B cell (primary cell): ENCODE measurements at regions of chr1 and their contacts with region 1.

Region 1: DNA sequence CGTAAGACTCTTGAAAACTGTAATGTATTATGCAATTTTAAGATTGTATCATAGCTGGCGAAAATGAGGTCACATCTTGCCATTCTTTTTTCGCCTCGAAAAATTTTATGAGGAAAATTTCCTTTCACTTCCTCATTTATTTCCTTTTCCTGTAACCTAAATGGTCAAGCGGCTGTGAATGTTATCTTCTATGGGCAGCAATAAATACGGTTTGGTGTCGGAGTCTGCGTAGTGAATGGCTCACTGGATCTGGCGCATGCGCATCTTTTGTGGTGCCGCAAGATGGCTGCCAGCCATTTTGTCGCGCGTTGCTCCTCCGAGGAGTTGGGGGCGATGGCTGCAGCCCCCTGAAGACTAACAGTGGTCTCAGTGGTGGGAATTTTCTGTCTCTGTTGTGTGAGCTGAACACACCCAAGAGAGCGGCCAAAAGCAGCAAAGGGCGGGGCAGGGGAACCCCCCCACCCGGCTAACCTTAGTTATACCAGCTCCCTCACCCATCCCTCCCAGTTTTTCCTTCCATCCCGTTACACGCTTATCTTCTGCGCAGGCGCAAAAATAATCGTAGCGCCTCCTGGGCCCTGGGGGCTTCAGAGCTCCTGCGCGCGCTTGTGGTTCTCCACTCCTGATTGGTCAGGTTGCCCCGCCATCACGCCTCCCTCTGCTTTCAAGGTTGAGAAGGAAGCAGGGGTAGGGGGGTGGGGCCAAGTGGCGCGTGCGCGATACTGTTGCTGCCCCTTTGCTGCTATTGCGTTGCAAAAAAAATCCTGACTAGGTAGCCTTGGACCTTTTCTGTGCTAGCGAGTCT is at the start of gene RPRD2:
- DNase-seq: peak; percentile 99
- ATAC-seq: peak; percentile 94
- H3K4me3 ChIP-seq: peak within 1 kb of the TSS; percentile 74 to 99 (median 90)
- H3K4me3 Mint-ChIP-seq: peak within 1 kb of the TSS; percentile 99
- H3K27ac ChIP-seq: peak within 1 kb of the TSS; percentile 87 to 90
- H3K27ac Mint-ChIP-seq: peak within 1 kb of the TSS; percentile 99
- H3K4me1 ChIP-seq: peaks cover 21 to 24% of the 10 kb centered on the region in 2 donors
- H3K4me1 Mint-ChIP-seq: peaks cover 31% of the 10 kb centered on the region
- H3K27me3 ChIP-seq: no peaks in the 10 kb centered on the region
- H3K27me3 Mint-ChIP-seq: no peaks in the 10 kb centered on the region
- CTCF ChIP-seq: no peak
- total RNA-seq, gene RPRD2: 49.1 and 51.4 TPM in 2 replicates

Region 2: DNA sequence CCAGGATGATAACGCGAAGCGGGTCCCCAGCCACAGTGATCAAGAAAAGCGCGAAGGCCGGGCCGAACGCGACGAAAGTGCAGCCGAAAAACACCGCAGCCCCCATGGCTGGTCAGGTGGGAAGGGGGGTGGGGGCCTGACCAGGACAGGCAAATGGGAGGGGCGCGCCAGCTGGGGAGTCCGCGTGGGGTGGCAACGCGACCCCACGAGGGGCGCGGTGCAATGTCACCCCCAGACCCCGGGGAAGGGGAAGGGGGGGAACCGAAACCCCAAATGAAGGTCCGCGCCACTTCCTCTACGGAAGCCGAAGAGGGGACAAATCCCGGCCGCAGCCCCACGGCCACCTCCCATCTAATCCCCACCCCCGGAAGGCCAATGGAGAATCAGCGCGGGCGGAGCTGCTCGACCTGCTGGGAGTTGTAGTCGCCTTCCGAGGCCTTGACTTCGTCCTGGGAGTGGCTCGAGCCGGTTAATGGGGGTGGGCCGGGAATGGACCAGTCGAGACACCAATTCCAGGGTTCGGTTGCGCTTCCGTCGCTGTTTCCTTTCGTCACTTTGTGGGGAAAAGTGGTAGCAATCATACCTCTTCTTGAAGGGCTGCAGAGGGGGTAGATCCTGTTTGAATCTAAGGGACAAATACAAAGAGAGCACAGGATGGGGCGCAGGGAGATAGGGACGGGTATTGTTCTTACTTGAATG is 94.8 kb before region 1 on chr1 and contains the start of gene APH1A:
- CTCF ChIA-PET with region 1: interaction called, 4 read pairs
- POLR2A ChIA-PET with region 1: interaction called, 7 read pairs
- intact Hi-C with region 1: loop called (anchors 1 kb)
- DNase-seq: peak; percentile 96
- ATAC-seq: peak; percentile 98
- H3K4me3 ChIP-seq: peak within 1 kb of the TSS; percentile 62 to 98 (median 95)
- H3K4me3 Mint-ChIP-seq: peak within 1 kb of the TSS; percentile 97
- H3K27ac ChIP-seq: peak within 1 kb of the TSS; percentile 94 to 95
- H3K27ac Mint-ChIP-seq: peak within 1 kb of the TSS; percentile 98
- H3K4me1 ChIP-seq: peaks cover 19 to 27% of the 10 kb centered on the region in 2 donors
- H3K4me1 Mint-ChIP-seq: peaks cover 30% of the 10 kb centered on the region
- H3K27me3 ChIP-seq: no peaks in the 10 kb centered on the region
- H3K27me3 Mint-ChIP-seq: peaks cover 6% of the 10 kb centered on the region
- CTCF ChIP-seq: no peak
- total RNA-seq, gene APH1A: 134 and 135 TPM in 2 replicates

Region 3: GRCh38 chr1:150321826-150322166 is 41.8 kb before region 1 on chr1:
- CTCF ChIA-PET with region 1: no interaction called
- POLR2A ChIA-PET with region 1: interaction called, 6 read pairs
- intact Hi-C with region 1: loop called (anchors 1 kb)
- DNase-seq: no peak
- ATAC-seq: no peak
- H3K4me3 ChIP-seq: peak overlapping the region; percentile 85 to 99 (median 92)
- H3K4me3 Mint-ChIP-seq: peak overlapping the region; percentile 98
- H3K27ac ChIP-seq: peak overlapping the region; percentile 86 to 97
- H3K27ac Mint-ChIP-seq: peak overlapping the region; percentile 98
- H3K4me1 ChIP-seq: peaks cover 13% of the 10 kb centered on the region in 2 donors
- H3K4me1 Mint-ChIP-seq: peaks cover 24% of the 10 kb centered on the region
- H3K27me3 ChIP-seq: no peaks in the 10 kb centered on the region
- H3K27me3 Mint-ChIP-seq: no peaks in the 10 kb centered on the region
- CTCF ChIP-seq: no peak

Region 4: GRCh38 chr1:150863724-150864123 is 500.1 kb after region 1 on chr1:
- CTCF ChIA-PET with region 1: no interaction called
- POLR2A ChIA-PET with region 1: no interaction called
- intact Hi-C with region 1: no loop called
- DNase-seq: no peak
- ATAC-seq: no peak
- H3K4me3 ChIP-seq: no peak overlapping the region
- H3K4me3 Mint-ChIP-seq: no peak overlapping the region
- H3K27ac ChIP-seq: no peak overlapping the region
- H3K27ac Mint-ChIP-seq: no peak overlapping the region
- H3K4me1 ChIP-seq: peaks cover 0 to 6% of the 10 kb centered on the region in 2 donors
- H3K4me1 Mint-ChIP-seq: peaks cover 21% of the 10 kb centered on the region
- H3K27me3 ChIP-seq: no peaks in the 10 kb centered on the region
- H3K27me3 Mint-ChIP-seq: no peaks in the 10 kb centered on the region
- CTCF ChIP-seq: no peak

Region 5: DNA sequence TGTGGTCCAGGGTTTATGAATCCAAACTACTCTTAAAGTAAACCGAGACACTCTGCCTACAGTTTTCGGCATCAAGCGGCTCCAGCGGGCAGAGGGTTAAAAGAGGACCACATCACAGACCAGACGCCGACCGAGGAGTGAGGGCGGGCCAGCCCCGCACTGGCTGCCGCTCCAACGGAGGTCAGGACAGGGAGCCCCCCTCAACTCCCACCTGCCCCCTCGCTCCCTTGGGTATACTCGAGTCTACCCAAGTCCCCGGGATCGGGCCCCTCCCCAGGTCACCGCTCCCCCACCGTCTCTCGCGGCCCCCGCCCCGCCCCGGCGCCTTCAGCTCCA is 512.5 kb after region 1 on chr1:
- CTCF ChIA-PET with region 1: no interaction called
- POLR2A ChIA-PET with region 1: no interaction called
- intact Hi-C with region 1: loop called (anchors 2 kb)
- DNase-seq: no peak
- ATAC-seq: no peak
- H3K4me3 ChIP-seq: peak overlapping the region; percentile 72 to 87 (median 84)
- H3K4me3 Mint-ChIP-seq: peak overlapping the region; percentile 88
- H3K27ac ChIP-seq: peak overlapping the region; percentile 64 to 80
- H3K27ac Mint-ChIP-seq: peak overlapping the region; percentile 90
- H3K4me1 ChIP-seq: peaks cover 20% of the 10 kb centered on the region in 2 donors
- H3K4me1 Mint-ChIP-seq: peaks cover 32% of the 10 kb centered on the region
- H3K27me3 ChIP-seq: no peaks in the 10 kb centered on the region
- H3K27me3 Mint-ChIP-seq: no peaks in the 10 kb centered on the region
- CTCF ChIP-seq: no peak